T-cell (primary cell): ENCODE measurements at regions of chr12 and their contacts with region 1.

Region 1: DNA sequence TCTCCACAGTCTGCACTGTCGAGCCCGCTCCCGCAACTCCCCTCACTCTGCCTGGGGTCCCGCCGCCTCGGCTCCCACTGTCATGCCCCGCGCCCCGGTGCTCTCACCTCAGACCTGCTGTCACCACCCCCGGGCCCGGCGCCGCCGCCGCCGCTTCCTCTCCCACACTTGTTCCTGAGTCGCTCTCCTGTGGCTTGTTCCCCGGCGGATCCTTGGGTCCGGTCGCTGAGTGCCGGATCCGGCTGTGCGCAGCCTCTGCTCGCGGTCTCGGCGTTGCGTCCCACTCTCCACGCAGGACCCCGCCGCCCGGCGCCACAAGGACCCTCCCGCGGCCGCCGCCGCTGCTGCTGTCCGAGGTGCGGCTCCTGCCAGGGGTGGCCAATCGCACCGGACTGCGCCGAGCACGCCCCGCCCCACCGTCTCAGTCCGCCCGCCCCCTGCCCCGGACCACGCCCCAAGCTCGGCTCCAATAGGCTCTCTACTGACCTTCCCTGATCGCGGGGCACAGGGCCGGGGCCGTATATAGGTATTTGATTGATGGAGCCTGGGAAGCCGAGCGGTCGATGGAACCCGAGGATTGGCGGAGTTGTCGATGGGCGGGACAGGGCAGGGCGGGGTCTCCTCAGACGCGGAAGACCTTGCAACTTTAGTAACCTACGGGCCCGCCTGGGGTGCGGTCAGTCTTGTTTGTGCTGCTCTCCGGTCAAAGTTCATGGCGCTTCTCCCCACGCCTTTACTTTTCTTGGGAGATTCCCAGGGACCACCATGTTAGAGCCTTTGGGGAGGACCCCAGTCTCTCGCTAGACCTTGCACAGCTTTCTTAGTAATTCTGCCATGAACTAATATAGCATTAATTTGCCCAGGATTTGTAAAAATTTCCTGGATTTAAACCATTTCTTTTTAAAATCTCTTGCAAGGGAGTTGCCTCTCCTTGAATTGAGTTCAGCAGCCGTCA is at the start of gene TAOK3:
- DNase-seq: peak; percentile 91 to 98 (median 96)
- ATAC-seq: peak; percentile 85 to 88 (median 86)
- H3K4me3 ChIP-seq: peak within 1 kb of the TSS; percentile 91 to 97
- H3K4me3 Mint-ChIP-seq: peak within 1 kb of the TSS; percentile 91 to 96 (median 92)
- H3K27ac ChIP-seq: peak within 1 kb of the TSS; percentile 88
- H3K27ac Mint-ChIP-seq: peak within 1 kb of the TSS; percentile 97 to 98
- H3K4me1 ChIP-seq: peaks cover 26 to 36% of the 10 kb centered on the region in 2 experiments
- H3K4me1 Mint-ChIP-seq: peaks cover 53 to 61% (median 59%) of the 10 kb centered on the region in 3 donors
- H3K27me3 ChIP-seq: no peaks in the 10 kb centered on the region
- H3K27me3 Mint-ChIP-seq: no peaks in the 10 kb centered on the region
- total RNA-seq, gene TAOK3: 58.7 to 93.6 (median 67.4) TPM

Region 2: DNA sequence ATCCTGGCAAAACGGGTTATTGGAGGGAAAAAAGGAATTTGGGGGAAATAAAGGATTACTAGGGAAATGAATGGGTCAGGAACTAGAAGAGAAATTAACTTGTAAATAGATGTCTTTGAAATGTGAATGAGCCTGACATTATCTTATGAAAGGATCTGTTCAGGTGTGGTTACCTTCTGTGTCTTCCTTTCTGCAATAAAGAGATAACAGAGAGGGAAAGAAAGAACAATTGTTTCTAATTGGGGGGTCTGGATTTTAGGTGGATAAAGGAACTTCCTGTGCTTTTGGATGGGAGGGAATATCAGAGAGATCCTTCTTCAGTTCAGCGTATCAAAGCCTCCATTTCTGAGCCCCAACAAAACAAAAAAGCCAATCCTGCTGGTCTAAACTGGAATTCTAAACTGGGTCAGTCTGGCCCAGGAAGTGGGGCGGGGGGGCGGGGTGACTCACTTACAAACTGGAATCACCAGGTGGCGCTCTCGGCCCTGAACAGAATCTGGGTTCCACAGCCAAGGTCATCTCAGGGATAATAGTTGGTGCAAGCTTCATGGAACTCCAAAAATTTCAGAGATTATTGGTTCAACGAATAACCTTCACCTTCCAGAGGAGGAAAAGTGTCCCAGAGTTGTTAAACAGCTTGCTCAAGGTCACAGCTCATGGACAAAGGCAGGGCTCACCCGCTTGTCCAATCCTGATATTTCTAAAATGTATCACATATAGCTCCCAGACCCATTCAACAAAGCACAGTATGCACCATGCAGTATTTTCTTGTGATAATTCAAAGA is 252.0 kb before region 1 on chr12:
- CTCF ChIA-PET with region 1: interaction called, 4 to 22 read pairs
- POLR2A ChIA-PET with region 1: no interaction called
- DNase-seq: peak in 32 of 35 experiments; percentile 16 to 76 (median 48)
- ATAC-seq: peak; percentile 56 to 83 (median 72)
- H3K4me3 ChIP-seq: no peak overlapping the region
- H3K4me3 Mint-ChIP-seq: no peak overlapping the region
- H3K27ac ChIP-seq: peak overlapping the region; percentile 78
- H3K27ac Mint-ChIP-seq: peak overlapping the region; percentile 80 to 86
- H3K4me1 ChIP-seq: peaks cover 0 to 2% of the 10 kb centered on the region in 2 experiments
- H3K4me1 Mint-ChIP-seq: peaks cover 7 to 12% (median 8%) of the 10 kb centered on the region in 3 donors
- H3K27me3 ChIP-seq: no peaks in the 10 kb centered on the region
- H3K27me3 Mint-ChIP-seq: no peaks in the 10 kb centered on the region

Region 3: DNA sequence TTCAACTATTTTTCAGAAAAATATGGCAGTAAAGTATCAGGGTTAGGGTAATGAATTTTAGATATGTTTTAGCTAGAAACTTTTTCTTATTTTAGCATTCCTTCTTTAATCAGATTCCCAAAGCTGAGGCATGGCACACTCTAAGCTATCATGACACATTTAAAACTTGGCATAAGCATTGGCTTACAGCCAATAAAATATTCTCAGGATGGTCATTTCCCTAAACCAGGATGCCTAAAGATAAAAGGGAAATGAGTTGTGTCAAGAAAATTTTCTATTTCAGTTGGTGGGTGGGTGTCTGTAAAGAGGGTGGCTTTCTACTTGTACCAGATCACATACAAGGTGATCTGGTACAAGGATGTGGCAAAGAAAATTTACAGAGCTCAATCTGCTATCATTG is 189.1 kb before region 1 on chr12:
- CTCF ChIA-PET with region 1: interaction called, 7 to 15 read pairs
- POLR2A ChIA-PET with region 1: no interaction called
- DNase-seq: no peak
- ATAC-seq: no peak
- H3K4me3 ChIP-seq: no peak overlapping the region
- H3K4me3 Mint-ChIP-seq: no peak overlapping the region
- H3K27ac ChIP-seq: no peak overlapping the region
- H3K27ac Mint-ChIP-seq: peak overlapping the region in 1 of 2 donors; percentile 28
- H3K4me1 ChIP-seq: peaks cover 0 to 3% of the 10 kb centered on the region in 2 experiments
- H3K4me1 Mint-ChIP-seq: peaks cover 18 to 25% (median 24%) of the 10 kb centered on the region in 3 donors
- H3K27me3 ChIP-seq: no peaks in the 10 kb centered on the region
- H3K27me3 Mint-ChIP-seq: no peaks in the 10 kb centered on the region